Activated naive CD4-positive, alpha-beta T cell treated with anti-CD3 and anti-CD28 coated beads for 36 hours (primary cell): ENCODE measurements at regions of chr22 and their contacts with region 1.

Region 1: DNA sequence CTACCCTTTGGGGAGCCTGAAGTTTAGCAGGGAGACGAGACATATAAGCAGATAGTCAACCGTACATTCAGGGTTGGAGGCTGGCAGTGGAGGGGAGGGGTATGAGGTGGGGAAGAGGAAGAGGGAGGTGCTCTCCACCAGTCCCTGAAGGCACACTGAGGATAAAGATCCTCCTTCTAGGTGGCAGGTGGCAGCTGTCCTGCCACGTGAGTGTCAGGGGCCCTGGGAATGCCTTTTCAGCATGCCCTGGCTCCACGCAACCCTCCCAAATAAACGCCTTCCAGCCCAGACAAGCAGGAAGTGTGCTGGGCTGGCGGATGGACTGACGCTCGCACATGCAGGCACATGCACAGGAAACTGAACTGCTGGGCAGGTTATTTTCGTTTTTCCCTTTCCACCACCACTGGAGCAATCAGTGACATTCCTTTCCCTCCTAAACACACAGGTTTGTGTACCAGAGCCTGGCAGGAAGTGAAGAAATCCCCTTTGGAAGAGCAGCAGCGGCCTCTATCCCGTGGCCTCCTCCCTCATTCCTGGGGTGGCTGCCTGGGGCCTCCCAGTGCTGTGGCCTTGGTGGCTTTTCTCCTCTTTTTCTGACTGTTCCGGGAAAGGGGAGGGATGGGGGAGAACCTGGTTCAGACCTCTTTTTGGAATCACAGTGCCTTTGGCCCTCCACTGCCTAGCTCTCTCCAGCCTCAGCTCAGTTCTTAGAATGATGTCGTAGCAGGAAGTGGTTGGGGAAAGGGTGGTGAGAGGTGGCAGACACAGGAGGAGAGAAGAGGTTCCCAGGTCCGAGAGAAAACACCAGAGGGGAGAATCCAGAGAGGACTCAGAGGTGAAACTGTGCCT is 157.0 kb upstream of the TIMP3 start:
- DNase-seq: peak; percentile 44
- H3K4me3 Mint-ChIP-seq: no peak overlapping the region
- H3K27ac Mint-ChIP-seq: peak overlapping the region; percentile 39
- H3K4me1 Mint-ChIP-seq: peaks cover 25% of the 10 kb centered on the region
- H3K27me3 Mint-ChIP-seq: no peaks in the 10 kb centered on the region

Region 2: DNA sequence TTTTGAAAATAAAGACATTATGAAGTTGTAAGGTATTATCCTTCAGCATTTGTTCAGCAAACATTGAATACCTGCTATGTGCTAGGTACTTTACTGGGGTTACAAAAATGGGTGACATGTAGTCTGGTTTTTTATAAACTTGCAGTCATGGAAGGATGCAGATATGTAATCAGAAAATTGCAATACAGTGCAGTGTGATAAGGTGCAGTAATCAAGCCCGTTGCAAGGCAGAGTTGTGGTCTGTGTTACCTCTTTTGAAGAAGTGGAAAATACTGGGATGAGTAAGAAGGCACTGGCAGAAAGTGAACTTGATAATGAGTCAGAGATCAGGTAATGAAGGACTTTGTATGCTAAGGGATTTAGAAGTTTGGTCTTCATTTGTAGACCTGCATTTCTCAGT is 161.8 kb before region 1 on chr22:
- CTCF ChIA-PET with region 1: no interaction called
- intact Hi-C with region 1: loop called (anchors 5 kb)
- DNase-seq: peak; percentile 64
- H3K4me3 Mint-ChIP-seq: no peak overlapping the region
- H3K27ac Mint-ChIP-seq: no peak overlapping the region
- H3K4me1 Mint-ChIP-seq: peaks cover 35% of the 10 kb centered on the region
- H3K27me3 Mint-ChIP-seq: no peaks in the 10 kb centered on the region